Endothelial cell of umbilical vein (primary cell): ENCODE measurements at regions of chr2 and their contacts with region 1.

Region 1: GRCh38 chr2:35973132-35973736 is 382.3 kb upstream of the CRIM1 start:
- DNase-seq: peak; percentile 78
- H3K4me3 ChIP-seq: no peak overlapping the region
- H3K27ac ChIP-seq: peak overlapping the region; percentile 64
- H3K4me1 ChIP-seq: peaks cover 8% of the 10 kb centered on the region
- H3K27me3 ChIP-seq: no peaks in the 10 kb centered on the region
- CTCF ChIP-seq: peak; percentile 45 to 67
- POLR2A ChIP-seq: no peak

Region 2: GRCh38 chr2:34105015-34105767 is 1868.0 kb before region 1 on chr2:
- CTCF ChIA-PET with region 1: no interaction called
- POLR2A ChIA-PET with region 1: no interaction called
- dilution Hi-C with region 1: no loop called
- intact Hi-C with region 1: loop called (anchors 10 kb)
- DNase-seq: peak; percentile 83
- H3K4me3 ChIP-seq: peak overlapping the region in 2 of 3 experiments; percentile 16 to 51
- H3K27ac ChIP-seq: peak overlapping the region; percentile 95
- H3K4me1 ChIP-seq: peaks cover 39% of the 10 kb centered on the region
- H3K27me3 ChIP-seq: no peaks in the 10 kb centered on the region
- CTCF ChIP-seq: no peak
- POLR2A ChIP-seq: no peak

Region 3: GRCh38 chr2:36044411-36044810 is 71.2 kb after region 1 on chr2:
- CTCF ChIA-PET with region 1: no interaction called
- POLR2A ChIA-PET with region 1: no interaction called
- dilution Hi-C with region 1: no loop called
- intact Hi-C with region 1: no loop called
- DNase-seq: no peak
- H3K4me3 ChIP-seq: no peak overlapping the region
- H3K27ac ChIP-seq: no peak overlapping the region
- H3K4me1 ChIP-seq: no peaks in the 10 kb centered on the region
- H3K27me3 ChIP-seq: peaks cover 0 to 6% of the 10 kb centered on the region in 2 experiments
- CTCF ChIP-seq: no peak
- POLR2A ChIP-seq: no peak

Region 4: GRCh38 chr2:36059691-36060090 is 86.5 kb after region 1 on chr2:
- CTCF ChIA-PET with region 1: no interaction called
- POLR2A ChIA-PET with region 1: no interaction called
- dilution Hi-C with region 1: no loop called
- intact Hi-C with region 1: loop called (anchors 2 kb)
- DNase-seq: peak; percentile 9
- H3K4me3 ChIP-seq: no peak overlapping the region
- H3K27ac ChIP-seq: no peak overlapping the region
- H3K4me1 ChIP-seq: peaks cover 11% of the 10 kb centered on the region
- H3K27me3 ChIP-seq: no peaks in the 10 kb centered on the region
- CTCF ChIP-seq: no peak
- POLR2A ChIP-seq: no peak

Region 5: DNA sequence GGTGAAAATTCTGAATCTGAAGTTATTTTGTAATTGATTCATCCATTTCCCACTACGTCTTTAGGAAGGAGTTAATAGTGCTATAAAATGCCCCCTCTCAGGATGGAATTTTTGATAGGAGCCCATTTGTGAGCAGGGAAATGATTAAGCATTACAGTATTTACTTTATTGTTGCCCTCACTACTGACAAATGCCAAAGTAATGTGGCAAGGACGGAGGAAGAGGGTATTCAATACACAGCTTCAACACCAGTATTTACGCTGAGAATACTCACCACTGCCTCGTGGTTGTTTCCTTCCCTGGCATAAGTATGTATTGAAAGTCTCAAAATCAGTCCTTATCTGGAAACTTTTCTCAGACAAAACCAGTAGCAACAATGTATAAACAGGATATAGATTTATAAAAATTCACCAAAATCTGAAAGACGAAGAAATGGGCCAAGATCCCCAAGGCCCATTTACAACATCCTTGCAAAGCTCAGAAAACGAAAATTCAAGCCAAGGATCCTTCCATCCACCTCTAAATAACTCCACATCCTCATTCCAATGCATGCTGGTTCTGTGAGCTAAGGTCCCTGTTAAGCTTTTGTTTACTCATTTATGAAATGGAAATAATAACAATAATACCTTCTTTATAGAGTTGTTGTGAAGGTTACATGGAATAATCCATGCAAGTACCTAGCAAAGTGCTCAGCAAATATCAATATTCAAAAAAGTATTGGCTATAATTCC is 595.4 kb after region 1 on chr2:
- CTCF ChIA-PET with region 1: no interaction called
- POLR2A ChIA-PET with region 1: no interaction called
- dilution Hi-C with region 1: no loop called
- intact Hi-C with region 1: loop called (anchors 2 kb)
- DNase-seq: peak; percentile 95
- H3K4me3 ChIP-seq: peak overlapping the region in 1 of 3 experiments; percentile 42
- H3K27ac ChIP-seq: peak overlapping the region; percentile 98
- H3K4me1 ChIP-seq: peaks cover 91% of the 10 kb centered on the region
- H3K27me3 ChIP-seq: no peaks in the 10 kb centered on the region
- CTCF ChIP-seq: no peak
- POLR2A ChIP-seq: peak; percentile 61

Region 6: GRCh38 chr2:36770542-36771287 is 797.5 kb after region 1 on chr2:
- CTCF ChIA-PET with region 1: no interaction called
- POLR2A ChIA-PET with region 1: no interaction called
- dilution Hi-C with region 1: no loop called
- intact Hi-C with region 1: loop called (anchors 1 kb)
- DNase-seq: peak; percentile 49
- H3K4me3 ChIP-seq: no peak overlapping the region
- H3K27ac ChIP-seq: no peak overlapping the region
- H3K4me1 ChIP-seq: no peaks in the 10 kb centered on the region
- H3K27me3 ChIP-seq: peaks cover 1 to 6% of the 10 kb centered on the region in 2 experiments
- CTCF ChIP-seq: peak; percentile 79
- POLR2A ChIP-seq: no peak